Heart left ventricle (tissue), 16 donors: ENCODE measurements at regions of chr17 and their contacts with region 1.

Region 1: DNA sequence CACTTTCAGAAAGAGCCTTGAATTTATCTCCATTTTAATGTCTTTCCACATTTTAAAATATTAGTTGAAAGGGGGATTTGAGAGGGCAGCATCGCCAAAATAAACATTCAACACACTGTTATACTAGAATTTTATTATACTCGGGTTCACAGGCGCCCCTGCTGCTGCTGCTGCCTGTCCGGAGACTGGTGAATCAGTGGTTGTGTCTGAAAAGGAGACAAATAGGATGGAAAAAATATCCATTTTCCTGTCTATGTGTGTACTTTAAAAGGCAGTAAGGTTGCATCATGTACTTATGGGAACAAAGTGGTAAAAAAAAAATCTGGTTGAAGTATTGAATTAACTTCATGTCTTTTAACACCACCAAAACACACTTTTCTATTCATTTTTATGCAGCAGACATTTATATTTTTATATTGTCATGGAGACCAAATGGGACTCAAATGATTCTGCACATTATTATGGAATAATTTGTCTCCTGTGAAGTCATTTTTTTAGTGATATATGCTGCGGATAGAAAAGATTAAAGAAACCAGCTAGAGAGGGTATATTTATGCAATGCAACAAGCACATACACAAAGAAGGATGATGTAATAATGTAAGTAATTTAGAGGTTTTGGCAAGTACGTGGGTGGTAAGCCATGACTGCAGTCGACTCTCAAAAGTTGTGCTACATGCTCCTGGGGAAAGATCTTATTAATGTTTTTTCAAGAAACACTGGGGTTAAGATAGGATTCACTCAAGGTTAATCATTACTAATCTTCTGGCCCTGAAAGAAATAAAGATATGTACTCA is 759.0 kb upstream of the SOX9 start:
- DNase-seq: no peak
- ATAC-seq: no peak
- H3K4me3 ChIP-seq: no peak overlapping the region
- H3K27ac ChIP-seq: no peak overlapping the region
- H3K4me1 ChIP-seq: no peaks in the 10 kb centered on the region
- H3K27me3 ChIP-seq: no peaks in the 10 kb centered on the region
- CTCF ChIP-seq: no peak
- POLR2A ChIP-seq: no peak

Region 2: GRCh38 chr17:71304498-71305158 is 57.2 kb before region 1 on chr17:
- intact Hi-C with region 1: loop called in 1 of 10 experiments (anchors 10 kb)
- DNase-seq: no peak
- ATAC-seq: no peak
- H3K4me3 ChIP-seq: no peak overlapping the region
- H3K27ac ChIP-seq: no peak overlapping the region
- H3K4me1 ChIP-seq: no peaks in the 10 kb centered on the region
- H3K27me3 ChIP-seq: no peaks in the 10 kb centered on the region
- CTCF ChIP-seq: no peak
- POLR2A ChIP-seq: no peak

Region 3: DNA sequence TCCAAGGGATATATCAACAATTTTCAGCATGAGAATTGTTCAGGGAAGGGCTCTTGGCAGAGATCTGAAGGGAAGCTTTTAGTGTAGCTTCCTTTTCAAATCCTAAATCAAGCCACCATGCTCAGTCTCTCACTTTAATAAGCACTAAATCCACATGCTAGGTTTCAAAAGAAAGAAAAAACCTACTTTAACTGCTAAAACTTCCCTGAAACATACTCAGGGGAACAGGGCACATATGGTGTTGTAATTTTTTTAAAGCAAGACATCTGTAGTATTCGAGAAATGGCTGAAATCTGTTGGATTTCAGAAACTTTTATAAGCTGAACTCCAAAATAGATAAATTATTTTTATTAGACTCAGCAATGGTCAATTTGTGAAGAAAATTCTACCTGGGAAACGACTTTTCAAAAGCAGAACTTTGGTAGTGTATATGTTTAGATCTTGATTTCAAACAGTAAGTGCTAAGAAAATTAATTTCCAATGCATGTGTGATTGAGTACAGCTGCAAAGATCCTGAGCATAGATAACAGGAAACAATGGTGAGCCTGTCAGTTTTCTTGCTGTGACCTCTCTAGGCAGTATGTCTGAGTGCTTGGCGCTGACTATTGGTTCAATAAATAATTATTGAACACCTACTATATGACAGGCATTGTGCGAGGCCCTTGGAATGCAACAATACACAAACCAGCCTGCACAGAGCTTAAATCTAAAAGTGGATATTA is 45.5 kb before region 1 on chr17:
- intact Hi-C with region 1: loop called in 1 of 10 experiments (anchors 10 kb)
- DNase-seq: no peak
- ATAC-seq: no peak
- H3K4me3 ChIP-seq: no peak overlapping the region
- H3K27ac ChIP-seq: no peak overlapping the region
- H3K4me1 ChIP-seq: no peaks in the 10 kb centered on the region
- H3K27me3 ChIP-seq: no peaks in the 10 kb centered on the region
- CTCF ChIP-seq: no peak
- POLR2A ChIP-seq: no peak

Region 4: GRCh38 chr17:71412803-71413202 is 51.0 kb after region 1 on chr17:
- intact Hi-C with region 1: no loop called
- DNase-seq: no peak
- ATAC-seq: no peak
- H3K4me3 ChIP-seq: no peak overlapping the region
- H3K27ac ChIP-seq: no peak overlapping the region
- H3K4me1 ChIP-seq: no peaks in the 10 kb centered on the region
- H3K27me3 ChIP-seq: no peaks in the 10 kb centered on the region
- CTCF ChIP-seq: no peak
- POLR2A ChIP-seq: no peak

Region 5: GRCh38 chr17:71458322-71458721 is 96.5 kb after region 1 on chr17:
- intact Hi-C with region 1: no loop called
- DNase-seq: no peak
- ATAC-seq: no peak
- H3K4me3 ChIP-seq: no peak overlapping the region
- H3K27ac ChIP-seq: no peak overlapping the region
- H3K4me1 ChIP-seq: no peaks in the 10 kb centered on the region
- H3K27me3 ChIP-seq: no peaks in the 10 kb centered on the region
- CTCF ChIP-seq: no peak
- POLR2A ChIP-seq: no peak